AG04450 (cell line): ENCODE measurements at regions of chr4 and their contacts with region 1.

Region 1: GRCh38 chr4:128809477-128810330 is at the start of gene JADE1:
- DNase-seq: peak; percentile 90
- H3K4me3 ChIP-seq: peak within 1 kb of the TSS; percentile 87
- H3K27ac ChIP-seq: peak within 1 kb of the TSS; percentile 89
- H3K27me3 ChIP-seq: no peaks in the 10 kb centered on the region
- CTCF ChIP-seq: peak; percentile 62
- polyA plus RNA-seq, gene JADE1: 20.4 and 23.2 TPM in 2 replicates

Region 2: GRCh38 chr4:128776794-128777216 is 32.9 kb before region 1 on chr4:
- CTCF ChIA-PET with region 1: no interaction called
- POLR2A ChIA-PET with region 1: interaction called, 11 read pairs
- DNase-seq: peak; percentile 82
- H3K4me3 ChIP-seq: no peak overlapping the region
- H3K27ac ChIP-seq: no peak overlapping the region
- H3K27me3 ChIP-seq: no peaks in the 10 kb centered on the region
- CTCF ChIP-seq: no peak

Region 3: GRCh38 chr4:128823025-128823661 is 13.4 kb after region 1 on chr4:
- CTCF ChIA-PET with region 1: interaction called, 4 read pairs
- POLR2A ChIA-PET with region 1: interaction called, 33 read pairs
- DNase-seq: peak; percentile 86
- H3K4me3 ChIP-seq: no peak overlapping the region
- H3K27ac ChIP-seq: no peak overlapping the region
- H3K27me3 ChIP-seq: no peaks in the 10 kb centered on the region
- CTCF ChIP-seq: no peak